Activated CD4-positive, alpha-beta T cell treated with anti-CD3 and anti-CD28 coated beads, Interleukin-2, amount 10 ng/mL, durations not matched to agents 24 days and 14 days (primary cell): ENCODE measurements at regions of chr11 and their contacts with region 1.

Region 1: GRCh38 chr11:46529095-46529905 is 64.5 kb downstream of the AMBRA1 start:
- DNase-seq: peak; percentile 91
- H3K4me3 Mint-ChIP-seq: no peak overlapping the region
- H3K27ac Mint-ChIP-seq: no peak overlapping the region
- H3K4me1 Mint-ChIP-seq: peaks cover 16% of the 10 kb centered on the region
- H3K27me3 Mint-ChIP-seq: no peaks in the 10 kb centered on the region

Region 2: DNA sequence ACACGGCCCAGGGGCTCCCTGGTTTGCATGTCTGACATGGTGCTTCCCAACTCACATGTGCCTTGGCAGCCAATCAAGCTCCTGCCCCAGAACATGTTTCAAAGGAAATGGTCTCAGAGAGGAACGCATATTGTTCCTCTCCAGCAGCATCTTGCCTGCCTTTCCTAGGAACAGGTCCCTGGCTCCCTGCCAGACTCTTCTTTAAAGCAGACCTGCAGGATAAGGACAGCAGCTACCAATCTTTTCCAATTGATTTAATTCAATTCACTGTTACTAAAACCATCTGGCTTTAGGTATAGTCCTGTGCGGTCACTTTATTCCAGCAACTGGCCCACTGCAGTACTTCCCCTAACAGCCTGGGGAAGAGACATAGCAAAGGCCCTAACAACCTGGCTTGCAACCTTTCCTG is 15.4 kb before region 1 on chr11:
- intact Hi-C with region 1: loop called (anchors 2 kb)
- DNase-seq: no peak
- H3K4me3 Mint-ChIP-seq: no peak overlapping the region
- H3K27ac Mint-ChIP-seq: no peak overlapping the region
- H3K4me1 Mint-ChIP-seq: peaks cover 9% of the 10 kb centered on the region
- H3K27me3 Mint-ChIP-seq: no peaks in the 10 kb centered on the region